OCI-LY7 (cell line): ENCODE measurements at regions of chr3 and their contacts with region 1.

Region 1: DNA sequence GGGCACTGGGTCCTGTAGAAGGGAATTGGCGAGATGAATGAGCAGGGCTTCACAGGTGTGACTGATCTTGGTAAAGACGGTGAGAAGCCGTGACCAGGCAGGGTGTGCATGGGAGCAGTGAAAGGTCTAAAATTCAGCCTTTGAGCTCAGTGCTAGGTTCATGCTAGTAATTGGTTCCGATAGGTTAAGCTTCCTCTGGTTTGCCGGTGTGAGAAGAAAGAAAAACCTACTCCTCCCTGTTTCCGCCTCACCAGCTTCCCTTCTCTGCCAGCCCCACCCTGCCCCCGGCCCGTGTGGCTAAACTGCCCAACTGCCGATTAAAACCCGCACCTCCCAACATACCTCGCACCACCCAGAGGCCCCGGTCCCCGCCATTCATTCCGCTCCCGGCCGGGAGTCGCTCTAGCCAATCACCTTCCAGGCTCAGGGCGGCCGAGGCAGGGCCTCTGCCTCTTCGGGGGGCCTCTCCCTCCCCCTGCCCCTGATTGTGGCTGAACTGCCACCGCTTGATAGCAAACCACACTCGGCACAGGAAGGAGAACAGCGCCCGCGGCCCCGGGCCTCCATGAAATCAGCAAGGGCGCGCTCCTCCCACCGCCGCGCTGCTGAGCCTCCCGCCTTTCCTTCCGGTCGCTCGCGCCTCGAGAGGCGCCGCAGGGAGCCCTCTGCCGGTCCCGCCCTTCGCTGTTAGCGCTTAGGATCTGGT is 7.3 kb upstream of the NRROS start:
- DNase-seq: peak; percentile 90
- H3K4me3 ChIP-seq: peak overlapping the region; percentile 68
- H3K27ac ChIP-seq: peak overlapping the region; percentile 70
- H3K4me1 ChIP-seq: peaks cover 34% of the 10 kb centered on the region
- CTCF ChIP-seq: peak; percentile 35; the same call in 1 of the 2 replicates

Region 2: GRCh38 chr3:196643201-196643749 is 11.1 kb after region 1 on chr3:
- CTCF ChIA-PET with region 1: no interaction called
- POLR2A ChIA-PET with region 1: interaction called, 4 read pairs
- intact Hi-C with region 1: loop called (anchors 1 kb)
- DNase-seq: peak; percentile 88
- H3K4me3 ChIP-seq: peak overlapping the region; percentile 7
- H3K27ac ChIP-seq: no peak overlapping the region
- H3K4me1 ChIP-seq: peaks cover 52% of the 10 kb centered on the region
- CTCF ChIP-seq: no peak

Region 3: DNA sequence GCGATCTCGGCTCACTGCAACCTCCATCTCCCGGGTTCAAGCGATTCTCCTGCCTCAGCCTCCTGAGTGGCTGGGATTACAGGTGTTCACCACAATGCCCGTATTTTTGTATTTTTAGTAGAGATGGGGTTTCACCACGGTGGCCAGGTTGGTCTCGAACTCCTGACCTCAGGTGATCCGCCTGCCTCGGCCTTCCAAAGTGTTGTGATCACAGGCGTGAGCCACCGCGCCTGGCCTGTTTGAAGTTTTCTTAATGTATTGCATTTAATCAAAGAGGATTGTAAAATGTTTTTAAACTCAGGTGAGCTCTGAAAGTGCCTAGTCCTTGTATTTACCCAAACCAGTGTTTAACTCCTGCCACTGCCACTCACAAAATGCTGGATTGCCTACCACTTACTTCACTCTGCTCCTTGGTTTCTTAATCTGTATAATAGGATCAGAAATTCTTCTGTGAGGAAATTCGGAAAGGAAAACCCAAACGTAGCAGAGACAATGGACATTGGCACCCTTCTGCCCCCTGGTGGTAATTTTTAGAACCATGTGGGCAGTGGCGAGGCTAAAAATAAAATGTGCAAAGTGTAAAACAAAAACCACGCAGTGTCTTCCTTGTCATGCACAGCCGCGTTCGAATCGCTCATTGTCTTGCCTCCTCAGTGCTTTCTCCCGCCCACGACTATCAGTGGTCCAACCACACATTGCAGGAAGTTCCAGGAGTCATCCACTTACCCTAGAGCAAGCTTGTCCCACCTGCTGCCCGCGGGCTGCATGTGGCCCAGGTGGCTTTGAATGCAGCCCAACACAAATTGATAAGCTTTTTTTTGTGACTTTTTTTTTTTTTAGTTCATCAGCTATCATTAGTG is 52.6 kb after region 1 on chr3:
- CTCF ChIA-PET with region 1: no interaction called
- POLR2A ChIA-PET with region 1: interaction called, 3 read pairs
- intact Hi-C with region 1: loop called (anchors 2 kb)
- DNase-seq: peak; percentile 80
- H3K4me3 ChIP-seq: peak overlapping the region; percentile 18
- H3K27ac ChIP-seq: no peak overlapping the region
- H3K4me1 ChIP-seq: peaks cover 10% of the 10 kb centered on the region
- CTCF ChIP-seq: peak; percentile 96

Region 4: GRCh38 chr3:197298341-197298857 is 666.2 kb after region 1 on chr3 and contains the start of gene DLG1:
- CTCF ChIA-PET with region 1: no interaction called
- POLR2A ChIA-PET with region 1: no interaction called
- intact Hi-C with region 1: loop called (anchors 10 kb)
- DNase-seq: peak; percentile 92
- H3K4me3 ChIP-seq: peak within 1 kb of the TSS; percentile 81
- H3K27ac ChIP-seq: peak within 1 kb of the TSS; percentile 84
- H3K4me1 ChIP-seq: peaks cover 32% of the 10 kb centered on the region
- CTCF ChIP-seq: no peak
- total RNA-seq, gene DLG1: 48.9 and 78.7 TPM in 2 replicates